ENCODE measurements at regions of chr6 and their contacts with region 1.

Region 1: DNA sequence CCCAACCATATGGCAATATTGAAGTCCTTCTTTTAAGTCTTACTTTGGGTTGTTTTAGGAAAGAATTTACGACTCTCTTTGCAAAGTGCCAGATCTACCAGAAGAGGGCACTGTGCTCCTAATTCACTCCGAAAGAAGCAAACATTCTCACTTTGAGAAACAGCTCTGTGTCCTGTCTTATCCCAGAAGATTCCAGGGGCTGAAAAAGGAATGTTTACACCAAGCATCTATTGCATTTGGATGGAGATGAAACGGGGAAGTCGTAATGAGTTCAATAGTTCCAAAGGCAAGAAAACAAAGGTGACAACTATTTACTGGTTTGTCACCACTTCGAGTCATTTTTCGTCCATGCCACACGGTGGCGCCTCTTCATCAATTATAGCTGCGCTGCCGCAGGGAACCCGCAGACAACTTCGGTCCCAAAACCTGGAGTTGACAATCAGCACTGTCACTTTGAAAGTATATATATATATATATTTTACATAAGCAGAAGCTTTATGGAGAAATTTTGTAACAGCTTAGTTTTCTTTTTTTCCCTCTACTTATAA is 121.6 kb downstream of the MOXD1 start:
- DNase-seq: peak; percentile 15 to 80
- H3K4me3 ChIP-seq: peak overlapping the region; percentile 18 to 59 (median 44); a peak in 7 of 8 replicates
- H3K27ac ChIP-seq: no peak overlapping the region
- H3K4me1 ChIP-seq: no peaks in the 10 kb centered on the region
- H3K27me3 ChIP-seq: no peaks in the 10 kb centered on the region
- CTCF ChIP-seq: peak; percentile 61 to 90 (median 74)
- EP300 ChIP-seq: no peak
- POLR2A ChIP-seq: no peak
- RAD21 ChIP-seq: peak; percentile 84

Region 2: GRCh38 chr6:132063738-132064137 is 215.9 kb before region 1 on chr6:
- CTCF ChIA-PET with region 1: no interaction called
- POLR2A ChIA-PET with region 1: no interaction called
- DNase-seq: no peak
- H3K4me3 ChIP-seq: no peak overlapping the region
- H3K27ac ChIP-seq: no peak overlapping the region
- H3K4me1 ChIP-seq: no peaks in the 10 kb centered on the region
- H3K27me3 ChIP-seq: peaks cover 0 to 1% (median 0%) of the 10 kb centered on the region in 4 experiments; a peak in 1 of 7 replicates
- CTCF ChIP-seq: no peak
- EP300 ChIP-seq: no peak
- POLR2A ChIP-seq: no peak
- RAD21 ChIP-seq: no peak

Region 3: GRCh38 chr6:132122871-132123270 is 156.8 kb before region 1 on chr6:
- CTCF ChIA-PET with region 1: no interaction called
- POLR2A ChIA-PET with region 1: no interaction called
- DNase-seq: no peak
- H3K4me3 ChIP-seq: no peak overlapping the region
- H3K27ac ChIP-seq: no peak overlapping the region
- H3K4me1 ChIP-seq: no peaks in the 10 kb centered on the region
- H3K27me3 ChIP-seq: no peaks in the 10 kb centered on the region; a peak in 1 of 7 replicates
- CTCF ChIP-seq: no peak
- EP300 ChIP-seq: no peak
- POLR2A ChIP-seq: no peak
- RAD21 ChIP-seq: no peak

Region 4: GRCh38 chr6:132207991-132208390 is 71.7 kb before region 1 on chr6:
- CTCF ChIA-PET with region 1: no interaction called
- POLR2A ChIA-PET with region 1: no interaction called
- DNase-seq: no peak
- H3K4me3 ChIP-seq: no peak overlapping the region
- H3K27ac ChIP-seq: no peak overlapping the region
- H3K4me1 ChIP-seq: no peaks in the 10 kb centered on the region
- H3K27me3 ChIP-seq: no peaks in the 10 kb centered on the region
- CTCF ChIP-seq: no peak
- EP300 ChIP-seq: no peak
- POLR2A ChIP-seq: no peak
- RAD21 ChIP-seq: no peak

Region 5: DNA sequence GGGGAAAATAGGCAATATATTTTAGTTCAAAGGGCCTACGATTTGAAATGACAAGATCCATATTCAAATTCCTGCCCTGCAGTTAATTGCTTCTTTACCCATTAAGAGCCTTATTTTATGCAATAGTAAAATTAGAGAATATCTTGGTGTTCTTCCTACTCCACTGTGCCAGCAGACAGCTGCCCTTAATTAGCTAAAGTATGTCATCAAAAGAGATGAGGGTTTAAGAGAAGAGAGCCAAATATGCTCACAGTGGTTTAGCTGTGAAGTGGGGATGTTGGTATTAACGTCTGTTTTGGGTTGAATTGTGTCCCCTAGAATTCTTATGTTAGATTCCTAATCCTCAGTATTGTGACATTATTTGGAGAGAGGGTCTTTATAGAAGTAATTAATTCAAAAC is 26.5 kb before region 1 on chr6:
- CTCF ChIA-PET with region 1: interaction called, 14 read pairs
- POLR2A ChIA-PET with region 1: no interaction called
- DNase-seq: no peak
- H3K4me3 ChIP-seq: no peak overlapping the region
- H3K27ac ChIP-seq: no peak overlapping the region
- H3K4me1 ChIP-seq: peaks cover 0 to 4% (median 0%) of the 10 kb centered on the region in 4 experiments; a peak in 2 of 7 replicates
- H3K27me3 ChIP-seq: no peaks in the 10 kb centered on the region
- CTCF ChIP-seq: no peak
- EP300 ChIP-seq: no peak
- POLR2A ChIP-seq: no peak
- RAD21 ChIP-seq: no peak

Region 6: GRCh38 chr6:132265451-132266097 is 14.1 kb before region 1 on chr6:
- CTCF ChIA-PET with region 1: interaction called, 74 read pairs
- POLR2A ChIA-PET with region 1: no interaction called
- DNase-seq: no peak
- H3K4me3 ChIP-seq: no peak overlapping the region
- H3K27ac ChIP-seq: no peak overlapping the region
- H3K4me1 ChIP-seq: no peaks in the 10 kb centered on the region
- H3K27me3 ChIP-seq: no peaks in the 10 kb centered on the region
- CTCF ChIP-seq: no peak
- EP300 ChIP-seq: no peak
- POLR2A ChIP-seq: no peak
- RAD21 ChIP-seq: no peak

Region 7: DNA sequence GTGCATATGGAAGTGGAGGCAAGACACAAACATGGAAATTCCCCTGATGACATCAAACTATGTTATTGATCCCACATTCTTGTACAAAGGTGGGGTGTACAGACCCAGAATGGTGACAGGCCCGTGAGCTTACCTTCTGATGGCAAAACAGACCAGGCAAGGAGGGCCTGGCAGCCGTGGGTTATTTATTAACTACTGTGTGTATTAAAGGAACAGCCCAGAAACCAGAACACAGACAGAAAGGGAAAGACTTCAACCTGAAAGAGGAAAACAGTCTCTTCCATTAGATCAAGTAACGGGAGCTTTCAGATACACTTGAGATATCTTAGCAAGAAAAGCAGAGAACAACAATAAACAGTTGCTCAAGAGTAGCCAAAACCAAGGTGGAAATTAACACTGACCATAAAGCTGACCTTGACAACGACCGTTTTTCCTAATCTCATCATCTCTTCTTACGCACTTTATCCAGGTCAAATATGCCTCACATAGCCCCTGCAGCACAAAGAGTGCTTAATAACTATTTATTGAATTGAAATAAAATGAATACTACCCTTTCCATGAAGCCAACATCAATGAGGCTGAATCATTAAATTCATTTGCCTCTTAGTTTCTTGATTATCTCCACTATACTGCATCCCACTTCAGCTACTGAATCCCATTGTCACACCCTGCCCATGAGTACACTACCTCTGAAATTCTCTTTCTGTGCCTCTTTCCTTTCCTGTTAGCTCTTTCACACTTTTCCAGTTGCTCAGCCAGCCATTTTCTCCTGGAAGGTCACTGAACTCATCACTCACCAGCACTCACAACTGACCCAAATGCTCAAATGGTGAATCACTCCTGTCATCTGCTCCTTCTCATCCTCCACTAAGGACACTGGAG is 54.2 kb after region 1 on chr6:
- CTCF ChIA-PET with region 1: interaction called, 12 read pairs
- POLR2A ChIA-PET with region 1: no interaction called
- DNase-seq: peak in 1 of 2 experiments; percentile 10
- H3K4me3 ChIP-seq: no peak overlapping the region
- H3K27ac ChIP-seq: no peak overlapping the region
- H3K4me1 ChIP-seq: peaks cover 0 to 4% (median 0%) of the 10 kb centered on the region in 4 experiments; a peak in 2 of 7 replicates
- H3K27me3 ChIP-seq: no peaks in the 10 kb centered on the region
- CTCF ChIP-seq: no peak
- EP300 ChIP-seq: no peak
- POLR2A ChIP-seq: no peak
- RAD21 ChIP-seq: no peak

Region 8: GRCh38 chr6:132471788-132472187 is 192.1 kb after region 1 on chr6:
- CTCF ChIA-PET with region 1: interaction called, 14 read pairs
- POLR2A ChIA-PET with region 1: no interaction called
- DNase-seq: no peak
- H3K4me3 ChIP-seq: no peak overlapping the region
- H3K27ac ChIP-seq: no peak overlapping the region
- H3K4me1 ChIP-seq: no peaks in the 10 kb centered on the region
- H3K27me3 ChIP-seq: no peaks in the 10 kb centered on the region
- CTCF ChIP-seq: no peak
- EP300 ChIP-seq: no peak
- POLR2A ChIP-seq: no peak
- RAD21 ChIP-seq: no peak

Region 9: DNA sequence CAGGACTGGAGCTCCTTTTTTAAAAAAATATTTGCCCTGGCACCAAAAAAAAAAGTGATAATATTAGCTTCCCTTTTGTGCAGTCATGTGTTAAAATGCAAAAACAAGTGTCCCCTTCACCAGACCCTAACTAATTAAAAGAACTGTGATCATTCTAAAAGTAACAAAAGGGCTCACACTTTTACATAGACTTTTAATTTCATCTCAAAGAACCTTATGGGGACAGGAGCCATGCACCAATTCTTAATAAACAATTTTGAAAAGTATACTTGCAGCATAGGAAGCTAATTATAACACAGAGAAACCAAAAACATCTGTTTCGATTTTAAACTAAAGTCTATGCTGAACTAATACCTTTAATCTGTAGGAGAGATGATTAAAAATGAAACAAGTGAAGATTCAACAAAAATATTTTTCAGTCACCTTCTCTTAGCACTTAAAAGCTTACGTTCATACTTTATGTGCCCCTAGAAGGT is 216.0 kb after region 1 on chr6:
- CTCF ChIA-PET with region 1: interaction called, 109 read pairs
- POLR2A ChIA-PET with region 1: no interaction called
- DNase-seq: no peak
- H3K4me3 ChIP-seq: no peak overlapping the region
- H3K27ac ChIP-seq: no peak overlapping the region
- H3K4me1 ChIP-seq: peaks cover 0 to 4% (median 2%) of the 10 kb centered on the region in 4 experiments; a peak in 5 of 7 replicates
- H3K27me3 ChIP-seq: no peaks in the 10 kb centered on the region
- CTCF ChIP-seq: no peak
- EP300 ChIP-seq: no peak
- POLR2A ChIP-seq: no peak
- RAD21 ChIP-seq: no peak